Mammary epithelial cell (primary cell): ENCODE measurements at regions of chr3 and their contacts with region 1.

Region 1: DNA sequence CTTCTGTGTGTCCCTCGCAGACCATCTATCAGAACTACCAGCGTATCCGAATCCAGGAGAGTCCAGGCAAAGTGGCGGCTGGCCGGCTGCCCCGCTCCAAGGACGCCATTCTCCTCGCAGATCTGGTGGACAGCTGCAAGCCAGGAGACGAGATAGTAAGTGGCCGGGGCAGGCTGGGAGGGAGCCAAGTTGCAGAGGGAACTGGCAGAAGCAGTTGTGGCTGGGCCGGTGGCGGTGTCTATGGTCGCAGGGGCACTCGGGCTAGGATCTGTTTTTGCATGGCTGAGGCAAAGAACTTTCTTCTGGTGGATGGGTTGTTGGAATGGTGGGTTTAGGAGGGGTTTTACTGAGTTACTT is 10.1 kb downstream of the MCM2 start:
- DNase-seq: no peak
- H3K4me3 ChIP-seq: no peak overlapping the region
- H3K27ac ChIP-seq: no peak overlapping the region
- H3K4me1 ChIP-seq: no peaks in the 10 kb centered on the region
- H3K27me3 ChIP-seq: no peaks in the 10 kb centered on the region
- CTCF ChIP-seq: no peak

Region 2: GRCh38 chr3:127639173-127640030 is 31.1 kb after region 1 on chr3:
- CTCF ChIA-PET with region 1: no interaction called
- dilution Hi-C with region 1: no loop called
- in situ Hi-C with region 1: no loop called
- intact Hi-C with region 1: no loop called
- DNase-seq: peak; percentile 65
- H3K4me3 ChIP-seq: no peak overlapping the region
- H3K27ac ChIP-seq: no peak overlapping the region
- H3K4me1 ChIP-seq: peaks cover 3% of the 10 kb centered on the region
- H3K27me3 ChIP-seq: peaks cover 5% of the 10 kb centered on the region
- CTCF ChIP-seq: no peak

Region 3: GRCh38 chr3:127710155-127710941 is 102.0 kb after region 1 on chr3:
- CTCF ChIA-PET with region 1: no interaction called
- dilution Hi-C with region 1: loop called (anchors 5 kb)
- in situ Hi-C with region 1: no loop called
- intact Hi-C with region 1: no loop called
- DNase-seq: peak; percentile 10
- H3K4me3 ChIP-seq: no peak overlapping the region
- H3K27ac ChIP-seq: no peak overlapping the region
- H3K4me1 ChIP-seq: peaks cover 6% of the 10 kb centered on the region
- H3K27me3 ChIP-seq: no peaks in the 10 kb centered on the region
- CTCF ChIP-seq: no peak